PC-9 (cell line): ENCODE measurements at regions of chr12 and their contacts with region 1.

Region 1: DNA sequence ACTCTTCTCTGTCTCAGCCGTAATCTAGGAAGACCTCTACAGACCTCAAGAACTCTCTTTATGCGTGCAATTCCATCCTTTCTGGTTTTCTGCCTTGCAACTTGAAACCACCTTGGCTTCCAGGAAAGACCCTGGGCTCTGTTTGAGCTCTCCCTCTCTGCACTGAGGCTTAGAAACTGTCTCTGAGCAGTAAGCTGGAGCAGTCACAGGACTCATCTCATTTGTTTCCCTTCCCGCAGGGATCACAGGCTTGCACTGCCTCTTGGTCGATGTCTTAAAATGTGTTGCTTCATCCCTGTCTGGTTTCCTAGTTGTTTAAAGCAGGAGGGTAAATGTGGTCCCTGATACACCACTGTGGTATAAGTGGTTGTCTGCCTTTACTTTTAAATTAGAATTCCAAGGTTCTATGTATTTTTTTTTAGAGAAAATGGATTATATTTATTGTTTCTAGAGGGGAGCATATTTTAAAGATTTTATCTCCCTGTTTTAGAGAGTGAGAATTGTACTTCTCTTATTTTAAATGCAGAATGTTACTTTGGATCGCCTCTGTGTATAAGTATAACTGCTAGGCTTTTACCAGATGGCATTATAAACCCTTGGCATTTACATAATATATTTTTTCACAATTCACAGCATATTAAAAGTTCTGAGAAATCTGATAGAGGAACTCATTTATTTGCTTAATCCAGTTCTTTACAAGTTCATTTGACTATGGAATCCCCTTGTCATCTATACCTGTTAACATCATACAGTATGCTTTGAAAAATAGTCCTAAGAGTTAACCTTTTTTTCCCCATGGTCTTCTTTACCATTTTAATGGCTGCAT is 26.4 kb downstream of the EID3 start:
- DNase-seq: no peak
- H3K4me3 ChIP-seq: no peak overlapping the region
- H3K27ac ChIP-seq: peak overlapping the region; percentile 49
- H3K4me1 ChIP-seq: peaks cover 32% of the 10 kb centered on the region; the same call in 1 of the 2 replicates
- H3K27me3 ChIP-seq: no peaks in the 10 kb centered on the region
- CTCF ChIP-seq: no peak

Region 2: GRCh38 chr12:104342147-104342546 is 12.2 kb after region 1 on chr12:
- CTCF ChIA-PET with region 1: interaction called, 13 read pairs
- POLR2A ChIA-PET with region 1: interaction called, 13 read pairs
- intact Hi-C with region 1: no loop called
- DNase-seq: no peak
- H3K4me3 ChIP-seq: no peak overlapping the region
- H3K27ac ChIP-seq: peak overlapping the region; percentile 60
- H3K4me1 ChIP-seq: peaks cover 98% of the 10 kb centered on the region
- H3K27me3 ChIP-seq: no peaks in the 10 kb centered on the region
- CTCF ChIP-seq: no peak